ENCODE measurements at regions of chr2 and their contacts with region 1.

Region 1: GRCh38 chr2:74789271-74789670 is 44.7 kb upstream of the HK2 start:
- DNase-seq: peak; percentile 82 to 93 (median 91)
- H3K4me3 ChIP-seq: peak overlapping the region in 1 of 3 experiments; percentile 46
- H3K4me3 Mint-ChIP-seq: peak overlapping the region; percentile 44 to 84
- H3K27ac ChIP-seq: peak overlapping the region; percentile 56 to 82
- H3K27ac Mint-ChIP-seq: peak overlapping the region; percentile 85 to 97 (median 94)
- H3K4me1 ChIP-seq: peaks cover 24% of the 10 kb centered on the region in 2 donors
- H3K4me1 Mint-ChIP-seq: peaks cover 21% of the 10 kb centered on the region
- H3K27me3 ChIP-seq: no peaks in the 10 kb centered on the region
- H3K27me3 Mint-ChIP-seq: no peaks in the 10 kb centered on the region
- CTCF ChIP-seq: no peak

Region 2: DNA sequence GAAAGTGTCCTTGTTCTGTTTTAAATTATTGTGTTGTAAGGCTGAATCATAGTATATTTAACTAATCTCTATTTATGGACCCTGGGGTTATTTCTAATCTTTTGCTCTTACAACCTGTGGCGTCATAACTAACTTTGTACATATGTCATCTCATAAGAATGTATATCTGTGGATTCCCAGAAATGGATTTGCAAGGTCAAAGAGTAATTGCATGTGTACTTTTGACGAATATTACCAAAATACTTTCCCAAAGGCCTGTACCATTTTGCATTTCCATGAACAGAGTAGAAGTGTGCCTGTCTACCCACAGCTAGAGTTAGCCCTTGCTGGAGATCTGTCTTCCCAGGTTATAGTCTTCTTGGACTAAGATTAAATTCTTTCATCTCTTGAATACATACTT is 92.4 kb before region 1 on chr2:
- intact Hi-C with region 1: no loop called
- DNase-seq: no peak
- H3K4me3 ChIP-seq: no peak overlapping the region
- H3K4me3 Mint-ChIP-seq: no peak overlapping the region
- H3K27ac ChIP-seq: no peak overlapping the region
- H3K27ac Mint-ChIP-seq: no peak overlapping the region
- H3K4me1 ChIP-seq: peaks cover 26 to 29% of the 10 kb centered on the region in 2 donors
- H3K4me1 Mint-ChIP-seq: peaks cover 24% of the 10 kb centered on the region
- H3K27me3 ChIP-seq: no peaks in the 10 kb centered on the region
- H3K27me3 Mint-ChIP-seq: peaks cover 0 to 5% (median 4%) of the 10 kb centered on the region in 3 donors
- CTCF ChIP-seq: no peak

Region 3: GRCh38 chr2:74747341-74748188 is 41.7 kb before region 1 on chr2:
- intact Hi-C with region 1: loop called in 1 of 2 experiments (anchors 5 kb)
- DNase-seq: peak; percentile 34 to 68 (median 49)
- H3K4me3 ChIP-seq: no peak overlapping the region
- H3K4me3 Mint-ChIP-seq: no peak overlapping the region
- H3K27ac ChIP-seq: no peak overlapping the region
- H3K27ac Mint-ChIP-seq: peak overlapping the region in 1 of 7 donors; percentile 60
- H3K4me1 ChIP-seq: peaks cover 4 to 6% of the 10 kb centered on the region in 2 donors
- H3K4me1 Mint-ChIP-seq: peaks cover 14% of the 10 kb centered on the region
- H3K27me3 ChIP-seq: no peaks in the 10 kb centered on the region
- H3K27me3 Mint-ChIP-seq: peaks cover 0 to 5% (median 4%) of the 10 kb centered on the region in 3 donors
- CTCF ChIP-seq: no peak